ENCODE measurements at regions of chr11 and their contacts with region 1.

Region 1: DNA sequence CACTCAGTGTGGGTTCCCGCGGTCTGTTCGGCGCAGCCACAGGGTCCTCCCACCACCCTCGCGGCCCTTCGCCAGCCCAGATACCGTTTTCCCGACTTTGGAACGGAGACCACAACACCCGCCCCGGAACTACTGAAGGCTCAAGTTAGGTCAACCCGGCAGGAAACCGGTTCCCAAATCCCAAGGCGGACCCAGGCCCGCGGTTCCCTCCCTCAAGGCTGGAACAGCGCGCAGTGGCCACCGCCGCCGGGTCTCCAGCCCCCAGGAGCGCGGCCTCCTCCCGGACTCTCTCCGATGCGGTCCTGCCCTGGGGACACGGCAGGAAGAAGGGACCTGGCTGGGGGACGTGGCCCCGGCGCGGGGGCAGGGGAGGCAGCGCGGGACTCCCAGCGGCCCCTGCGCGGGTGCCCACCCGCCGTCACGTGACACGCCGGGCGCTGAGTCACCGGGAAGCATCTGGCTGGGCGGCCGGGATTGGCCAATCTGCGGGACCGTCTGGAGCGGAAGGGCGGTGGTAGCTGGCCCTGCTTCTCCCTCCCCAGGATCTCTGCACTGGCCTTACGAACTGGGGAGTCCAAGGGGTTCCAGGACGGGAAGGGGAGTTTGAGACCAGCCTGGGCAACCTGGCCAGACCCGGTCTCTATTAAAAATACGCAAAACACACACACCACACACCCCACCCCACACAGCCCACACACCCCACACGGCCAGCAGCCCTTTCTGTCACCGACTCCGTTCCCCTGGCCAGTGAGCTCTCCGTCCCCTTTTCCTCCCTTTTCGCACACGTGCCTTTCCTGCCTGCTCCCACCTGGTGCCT is 21.5 kb upstream of the MALAT1 start:
- DNase-seq: peak; percentile 97
- ATAC-seq: peak; percentile 81
- H3K4me3 ChIP-seq: peak overlapping the region; percentile 80
- H3K27ac ChIP-seq: peak overlapping the region; percentile 95
- H3K4me1 ChIP-seq: peaks cover 40% of the 10 kb centered on the region
- H3K27me3 ChIP-seq: no peaks in the 10 kb centered on the region
- CTCF ChIP-seq: no peak

Region 2: DNA sequence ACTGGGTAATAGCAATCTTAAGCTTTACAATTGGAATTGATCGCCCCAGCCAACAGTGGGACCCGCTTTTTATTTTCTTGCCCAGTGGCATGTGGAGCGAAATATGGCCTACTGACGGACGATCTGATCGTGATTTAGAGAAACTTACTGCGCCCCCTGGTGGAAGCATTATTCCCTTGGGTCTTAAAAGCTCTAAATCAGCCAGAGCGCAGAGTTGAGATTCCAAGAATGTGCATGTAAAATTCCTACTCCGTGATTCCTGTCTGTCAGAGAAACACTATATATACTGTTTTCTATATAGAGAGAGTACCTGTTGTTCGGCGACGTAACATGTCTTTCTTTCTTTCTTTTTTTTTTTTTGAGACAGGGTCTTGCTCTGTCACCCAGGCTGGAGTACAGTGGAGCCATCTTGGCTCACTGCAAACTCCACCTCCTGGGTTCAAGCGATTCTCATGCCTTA is 147.4 kb before region 1 on chr11:
- CTCF ChIA-PET with region 1: no interaction called
- POLR2A ChIA-PET with region 1: no interaction called
- intact Hi-C with region 1: no loop called
- DNase-seq: peak; percentile 98
- ATAC-seq: peak; percentile 46
- H3K4me3 ChIP-seq: peak overlapping the region; percentile 15; the same call in 1 of the 2 replicates
- H3K27ac ChIP-seq: no peak overlapping the region
- H3K4me1 ChIP-seq: peaks cover 11% of the 10 kb centered on the region
- H3K27me3 ChIP-seq: no peaks in the 10 kb centered on the region
- CTCF ChIP-seq: peak; percentile 91

Region 3: GRCh38 chr11:65487413-65488272 is 10.3 kb after region 1 on chr11:
- CTCF ChIA-PET with region 1: interaction called, 11 read pairs
- POLR2A ChIA-PET with region 1: interaction called, 21 read pairs
- intact Hi-C with region 1: no loop called
- DNase-seq: peak; percentile 94
- ATAC-seq: peak; percentile 59
- H3K4me3 ChIP-seq: no peak overlapping the region
- H3K27ac ChIP-seq: peak overlapping the region; percentile 29
- H3K4me1 ChIP-seq: peaks cover 40% of the 10 kb centered on the region
- H3K27me3 ChIP-seq: no peaks in the 10 kb centered on the region
- CTCF ChIP-seq: no peak

Measured in PC-3 (cell line).